ENCODE measurements at regions of chr6 and their contacts with region 1.

Region 1: GRCh38 chr6:99868074-99868702 is 125.8 kb downstream of the MCHR2 start:
- DNase-seq: peak; percentile 2
- ATAC-seq: peak; percentile 90
- H3K4me3 ChIP-seq: no peak overlapping the region
- H3K27ac ChIP-seq: no peak overlapping the region
- H3K4me1 ChIP-seq: no peaks in the 10 kb centered on the region
- H3K27me3 ChIP-seq: no peaks in the 10 kb centered on the region; a peak in 2 of 4 replicates
- CTCF ChIP-seq: peak; percentile 67 to 85 (median 75); a peak in 5 of 6 replicates
- EP300 ChIP-seq: no peak
- POLR2A ChIP-seq: no peak
- RAD21 ChIP-seq: peak; percentile 71

Region 2: DNA sequence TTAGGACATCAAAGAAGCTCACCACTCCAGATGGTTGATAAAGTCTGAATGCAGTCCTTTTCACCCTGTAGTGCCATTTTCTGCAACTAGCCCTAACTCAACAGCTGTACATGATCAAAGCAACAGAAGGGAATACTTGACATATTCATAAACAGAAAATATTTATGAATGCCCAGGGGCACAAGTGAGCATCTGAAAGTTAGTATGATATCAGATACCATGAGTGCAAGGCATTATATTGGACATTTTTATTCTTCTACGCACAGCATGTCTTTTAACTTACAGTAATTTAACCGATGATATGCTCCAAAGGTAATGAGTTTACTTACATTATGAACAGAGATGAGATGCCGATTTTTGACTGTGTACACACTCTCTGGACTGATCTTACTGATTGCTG is 16.2 kb before region 1 on chr6:
- CTCF ChIA-PET with region 1: interaction called, 22 read pairs
- POLR2A ChIA-PET with region 1: no interaction called
- RAD21 ChIA-PET with region 1: no interaction called
- SMC1A ChIA-PET with region 1: interaction called, 5 read pairs
- in situ Hi-C with region 1: no loop called
- intact Hi-C with region 1: no loop called
- DNase-seq: no peak
- ATAC-seq: no peak
- H3K4me3 ChIP-seq: no peak overlapping the region
- H3K27ac ChIP-seq: no peak overlapping the region
- H3K4me1 ChIP-seq: no peaks in the 10 kb centered on the region
- H3K27me3 ChIP-seq: no peaks in the 10 kb centered on the region
- CTCF ChIP-seq: no peak
- EP300 ChIP-seq: no peak
- POLR2A ChIP-seq: no peak
- RAD21 ChIP-seq: no peak

Region 3: DNA sequence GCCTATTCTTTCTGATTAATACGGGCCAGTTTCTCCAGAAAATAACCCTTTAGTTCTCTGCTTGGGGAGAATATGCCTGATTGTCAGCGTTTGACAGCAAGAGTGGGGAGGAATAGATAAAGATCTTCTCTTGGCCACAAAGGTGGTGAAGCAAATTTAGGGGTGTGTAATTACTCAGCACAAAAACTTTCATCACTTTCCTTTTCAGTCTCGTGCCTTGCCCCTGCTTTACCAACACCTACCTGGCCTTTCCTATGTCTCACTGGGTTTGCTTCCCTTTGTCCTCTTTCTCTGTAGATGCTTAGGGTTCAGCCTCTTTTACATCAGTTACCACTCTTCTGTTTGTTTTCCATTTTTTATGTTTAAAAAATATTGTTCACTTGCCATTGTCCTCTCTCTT is 26.6 kb after region 1 on chr6:
- CTCF ChIA-PET with region 1: interaction called, 12 read pairs
- POLR2A ChIA-PET with region 1: no interaction called
- RAD21 ChIA-PET with region 1: no interaction called
- SMC1A ChIA-PET with region 1: interaction called, 3 read pairs
- in situ Hi-C with region 1: no loop called
- intact Hi-C with region 1: no loop called
- DNase-seq: no peak
- ATAC-seq: no peak
- H3K4me3 ChIP-seq: no peak overlapping the region
- H3K27ac ChIP-seq: no peak overlapping the region
- H3K4me1 ChIP-seq: no peaks in the 10 kb centered on the region
- H3K27me3 ChIP-seq: no peaks in the 10 kb centered on the region
- CTCF ChIP-seq: no peak
- EP300 ChIP-seq: no peak
- POLR2A ChIP-seq: no peak
- RAD21 ChIP-seq: no peak

Region 4: GRCh38 chr6:100001915-100002388 is 133.8 kb after region 1 on chr6:
- CTCF ChIA-PET with region 1: interaction called, 18 read pairs
- POLR2A ChIA-PET with region 1: no interaction called
- RAD21 ChIA-PET with region 1: interaction called, 3 read pairs
- SMC1A ChIA-PET with region 1: interaction called, 3 read pairs
- in situ Hi-C with region 1: no loop called
- intact Hi-C with region 1: no loop called
- DNase-seq: no peak
- ATAC-seq: peak; percentile 95
- H3K4me3 ChIP-seq: no peak overlapping the region
- H3K27ac ChIP-seq: no peak overlapping the region
- H3K4me1 ChIP-seq: no peaks in the 10 kb centered on the region
- H3K27me3 ChIP-seq: peaks cover 0 to 4% of the 10 kb centered on the region in 2 experiments; a peak in 1 of 4 replicates
- CTCF ChIP-seq: peak; percentile 87 to 93 (median 91)
- EP300 ChIP-seq: no peak
- POLR2A ChIP-seq: no peak
- RAD21 ChIP-seq: peak; percentile 76

Region 5: DNA sequence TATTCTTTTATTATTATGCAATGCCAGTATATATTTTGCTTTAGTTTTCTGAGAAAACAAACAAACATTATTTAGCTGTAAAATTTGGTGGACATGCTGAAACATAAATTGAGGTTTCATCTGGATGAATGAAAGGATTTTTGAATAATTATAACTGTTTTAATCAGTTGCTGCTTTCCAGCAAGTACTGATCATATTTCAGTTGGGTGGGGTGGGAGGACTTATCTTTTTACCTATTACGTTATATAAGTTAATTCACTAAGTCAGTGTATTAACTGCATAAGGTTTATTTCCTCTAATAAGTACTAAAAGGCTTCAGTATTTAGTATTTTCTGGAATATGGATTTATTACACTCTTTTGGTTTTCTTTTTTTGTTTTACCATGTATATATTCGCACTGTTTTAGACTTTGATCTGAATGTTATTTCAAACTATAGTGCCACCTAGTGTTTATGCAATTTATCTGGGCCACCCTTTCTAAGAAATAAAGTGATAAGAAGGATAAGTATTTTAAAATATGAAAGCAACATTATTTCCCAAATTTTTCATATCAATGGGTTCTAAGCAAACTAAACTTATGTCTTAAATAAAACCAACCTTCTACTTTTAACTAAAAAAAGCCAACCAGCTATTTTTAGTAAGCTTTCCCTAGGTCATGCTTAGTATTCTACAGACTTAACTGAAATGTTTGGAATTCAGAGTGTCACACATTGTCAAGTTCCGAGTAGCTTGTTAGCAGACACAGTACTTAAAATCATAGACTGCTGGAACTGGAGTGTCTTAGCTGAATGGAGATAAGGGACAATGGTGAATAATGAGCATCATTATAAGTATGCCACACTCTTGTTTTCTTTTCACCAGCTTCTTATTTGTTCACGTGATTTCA is 231.2 kb after region 1 on chr6:
- CTCF ChIA-PET with region 1: interaction called, 104 read pairs
- POLR2A ChIA-PET with region 1: no interaction called
- RAD21 ChIA-PET with region 1: interaction called, 38 read pairs
- SMC1A ChIA-PET with region 1: interaction called, 51 read pairs
- in situ Hi-C with region 1: loop called (anchors 5 kb)
- intact Hi-C with region 1: loop called (anchors 1 kb)
- DNase-seq: no peak
- ATAC-seq: peak; percentile 66
- H3K4me3 ChIP-seq: no peak overlapping the region
- H3K27ac ChIP-seq: no peak overlapping the region
- H3K4me1 ChIP-seq: no peaks in the 10 kb centered on the region
- H3K27me3 ChIP-seq: no peaks in the 10 kb centered on the region
- CTCF ChIP-seq: peak in 2 of 3 experiments; percentile 23 to 45; a peak in 4 of 6 replicates
- EP300 ChIP-seq: no peak
- POLR2A ChIP-seq: no peak
- RAD21 ChIP-seq: peak; percentile 42; the same call in 1 of the 2 replicates

Region 6: DNA sequence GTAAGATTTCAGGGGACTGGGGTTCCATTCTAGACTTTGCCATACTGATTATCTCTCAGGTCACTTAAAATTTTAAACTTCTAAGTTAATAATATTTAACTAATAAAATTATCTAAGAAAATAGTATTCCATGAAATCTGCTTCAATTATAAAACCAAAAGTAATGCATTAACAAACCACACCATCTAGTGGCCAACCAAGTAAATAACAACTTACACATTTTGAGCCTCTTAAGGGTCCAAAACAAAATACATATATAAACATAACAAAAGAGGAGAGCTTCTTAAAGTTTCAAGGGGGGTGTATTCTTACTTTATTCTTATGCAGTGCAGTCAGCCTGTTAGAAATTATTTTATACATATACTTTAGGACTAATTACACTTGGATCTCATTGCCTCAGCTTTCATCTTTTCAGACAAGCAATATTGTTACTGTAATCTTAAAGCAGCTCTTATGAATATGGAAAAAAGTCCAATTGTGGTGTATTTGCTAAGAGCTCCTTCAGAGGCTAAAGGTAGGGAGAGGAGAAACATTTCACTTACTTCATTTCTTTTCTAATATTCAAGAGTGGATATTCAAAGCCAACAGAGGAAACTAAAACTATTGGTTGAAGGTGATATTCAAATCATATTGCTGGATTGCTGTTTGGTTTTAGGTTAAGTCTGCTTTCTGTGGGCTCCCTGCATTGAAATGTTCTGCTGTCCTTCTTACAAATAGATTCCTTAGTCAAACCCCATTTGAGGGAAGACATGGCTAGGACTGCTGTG is 796.3 kb after region 1 on chr6:
- CTCF ChIA-PET with region 1: interaction called, 5 read pairs
- POLR2A ChIA-PET with region 1: no interaction called
- RAD21 ChIA-PET with region 1: no interaction called
- SMC1A ChIA-PET with region 1: no interaction called
- in situ Hi-C with region 1: no loop called
- intact Hi-C with region 1: loop called (anchors 5 kb)
- DNase-seq: no peak
- ATAC-seq: peak; percentile 65
- H3K4me3 ChIP-seq: no peak overlapping the region
- H3K27ac ChIP-seq: peak overlapping the region; percentile 26; the same call in 1 of the 2 replicates
- H3K4me1 ChIP-seq: peaks cover 11% of the 10 kb centered on the region
- H3K27me3 ChIP-seq: no peaks in the 10 kb centered on the region
- CTCF ChIP-seq: peak; percentile 48 to 62 (median 50); a peak in 5 of 6 replicates
- EP300 ChIP-seq: no peak
- POLR2A ChIP-seq: no peak
- RAD21 ChIP-seq: peak; percentile 48

Measured in GM12878 (cell line).